Left ventricle myocardium inferior (tissue), 1 donor: ENCODE measurements at regions of chr10 and their contacts with region 1.

Region 1: DNA sequence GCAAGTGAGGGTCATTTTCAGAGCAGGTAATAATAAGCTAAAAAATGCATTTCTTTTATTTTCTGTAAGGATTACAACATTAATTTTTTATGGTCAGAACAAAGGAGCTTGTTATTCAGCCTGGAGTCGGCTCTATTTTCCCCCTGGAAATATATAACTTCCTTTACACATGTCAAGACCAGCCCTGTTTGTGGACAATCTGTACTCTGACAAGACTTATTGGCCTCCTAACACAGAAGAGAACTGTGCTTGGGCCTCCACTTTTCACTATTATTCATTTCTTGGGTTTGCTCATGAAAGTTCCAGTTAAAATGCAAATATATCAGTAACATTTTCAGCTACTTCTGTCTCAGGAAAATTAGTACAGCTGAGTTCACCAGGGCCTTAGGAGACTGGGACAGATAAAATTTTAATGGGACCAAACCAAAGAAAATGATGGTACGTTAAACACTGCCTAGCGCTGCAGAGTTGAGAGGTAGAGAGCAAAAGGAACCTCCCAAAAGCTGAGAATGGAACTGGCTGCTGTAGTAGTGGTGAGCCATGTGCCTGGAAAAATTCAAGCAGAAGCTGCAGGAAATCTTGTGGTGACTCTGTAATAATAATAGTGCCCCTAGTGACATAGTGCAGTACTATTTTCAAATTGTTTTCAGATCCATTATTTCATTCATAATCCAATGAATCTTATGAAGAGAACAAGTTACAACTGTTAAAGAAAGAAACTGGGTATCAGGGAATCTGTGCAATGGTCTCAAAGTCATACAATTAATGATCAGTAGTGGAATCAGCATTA is 227.2 kb upstream of the KIAA1217 start:
- DNase-seq: no peak
- H3K4me3 ChIP-seq: no peak overlapping the region
- H3K27ac ChIP-seq: no peak overlapping the region
- H3K4me1 ChIP-seq: peaks cover 9% of the 10 kb centered on the region
- H3K27me3 ChIP-seq: no peaks in the 10 kb centered on the region
- CTCF ChIP-seq: no peak

Region 2: GRCh38 chr10:24518981-24519597 is 537.4 kb after region 1 on chr10:
- intact Hi-C with region 1: loop called (anchors 10 kb)
- DNase-seq: peak; percentile 28
- H3K4me3 ChIP-seq: no peak overlapping the region
- H3K27ac ChIP-seq: peak overlapping the region; percentile 32
- H3K4me1 ChIP-seq: peaks cover 14% of the 10 kb centered on the region
- H3K27me3 ChIP-seq: no peaks in the 10 kb centered on the region
- CTCF ChIP-seq: peak; percentile 82